Calu3 (cell line): ENCODE measurements at regions of chr12 and their contacts with region 1.

Region 1: GRCh38 chr12:72282721-72283120 is 10.6 kb downstream of the TRHDE start:
- DNase-seq: no peak
- H3K4me3 Mint-ChIP-seq: peak overlapping the region; percentile 36
- H3K27ac Mint-ChIP-seq: peak overlapping the region; percentile 73
- H3K4me1 Mint-ChIP-seq: peaks cover 66% of the 10 kb centered on the region
- H3K27me3 Mint-ChIP-seq: no peaks in the 10 kb centered on the region
- CTCF ChIP-seq: peak; percentile 18

Region 2: GRCh38 chr12:72270246-72270645 is 12.5 kb before region 1 on chr12:
- CTCF ChIA-PET with region 1: interaction called, 9 read pairs
- intact Hi-C with region 1: loop called (anchors 1 kb)
- DNase-seq: no peak
- H3K4me3 Mint-ChIP-seq: peak overlapping the region; percentile 92
- H3K27ac Mint-ChIP-seq: peak overlapping the region; percentile 73
- H3K4me1 Mint-ChIP-seq: peaks cover 11% of the 10 kb centered on the region
- H3K27me3 Mint-ChIP-seq: no peaks in the 10 kb centered on the region
- CTCF ChIP-seq: no peak